ENCODE measurements at regions of chr6 and their contacts with region 1.

Region 1: DNA sequence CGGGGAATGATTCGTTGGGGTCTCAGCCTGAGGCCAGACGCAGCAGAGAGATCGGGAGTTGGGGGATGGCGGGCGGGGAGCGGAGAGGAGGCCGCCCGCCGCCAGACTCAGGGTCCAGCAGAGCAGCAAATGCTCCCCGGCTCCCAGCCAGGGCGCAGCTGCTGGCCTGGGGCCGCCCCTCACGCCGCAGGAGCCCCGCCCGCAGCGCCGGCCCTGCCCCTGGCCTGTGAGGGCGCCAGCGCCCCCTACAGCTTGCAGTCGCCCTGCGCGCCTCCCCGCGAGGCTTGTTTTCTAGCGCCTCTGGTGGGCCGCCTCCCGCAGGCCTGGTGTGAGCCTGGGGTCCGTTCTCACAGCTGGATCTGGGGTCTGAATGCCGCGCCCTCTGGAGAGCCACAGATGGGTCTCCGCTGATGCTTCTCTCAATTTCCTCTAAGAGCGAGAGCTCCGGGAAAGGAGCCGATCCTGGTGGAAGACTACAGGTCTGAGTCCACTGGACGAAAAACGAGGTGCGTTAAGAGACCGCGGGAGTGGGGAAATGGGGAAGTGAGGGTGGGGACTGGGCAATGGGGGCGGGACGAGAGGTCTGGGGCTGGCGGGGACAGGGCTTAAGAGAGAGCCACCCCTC is 29.9 kb downstream of the TRIM38 start:
- H3K4me3 ChIP-seq: peak overlapping the region; percentile 55
- H3K27ac ChIP-seq: peak overlapping the region; percentile 62
- H3K4me1 ChIP-seq: no peaks in the 10 kb centered on the region
- CTCF ChIP-seq: peak; percentile 97

Region 2: GRCh38 chr6:25971187-25971811 is 21.2 kb before region 1 on chr6:
- CTCF ChIA-PET with region 1: interaction called, 14 read pairs
- POLR2A ChIA-PET with region 1: interaction called, 3 read pairs
- H3K4me3 ChIP-seq: no peak overlapping the region
- H3K27ac ChIP-seq: no peak overlapping the region
- H3K4me1 ChIP-seq: no peaks in the 10 kb centered on the region
- CTCF ChIP-seq: no peak

Region 3: GRCh38 chr6:26003102-26003694 is 10.7 kb after region 1 on chr6:
- CTCF ChIA-PET with region 1: interaction called, 102 read pairs
- POLR2A ChIA-PET with region 1: interaction called, 22 read pairs
- H3K4me3 ChIP-seq: no peak overlapping the region
- H3K27ac ChIP-seq: no peak overlapping the region
- H3K4me1 ChIP-seq: no peaks in the 10 kb centered on the region
- CTCF ChIP-seq: no peak

Region 4: GRCh38 chr6:26017632-26017966 is 25.1 kb after region 1 on chr6:
- CTCF ChIA-PET with region 1: interaction called, 61 read pairs
- POLR2A ChIA-PET with region 1: interaction called, 58 read pairs
- H3K4me3 ChIP-seq: peak overlapping the region; percentile 17; the same call in 1 of the 2 replicates
- H3K27ac ChIP-seq: no peak overlapping the region
- H3K4me1 ChIP-seq: no peaks in the 10 kb centered on the region
- CTCF ChIP-seq: no peak

Region 5: GRCh38 chr6:26031595-26032339 is 39.2 kb after region 1 on chr6:
- CTCF ChIA-PET with region 1: interaction called, 6 read pairs
- POLR2A ChIA-PET with region 1: interaction called, 26 read pairs
- H3K4me3 ChIP-seq: peak overlapping the region; percentile 71
- H3K27ac ChIP-seq: peak overlapping the region; percentile 63
- H3K4me1 ChIP-seq: peaks cover 12% of the 10 kb centered on the region
- CTCF ChIP-seq: peak; percentile 85